Body of pancreas (tissue), 4 donors: ENCODE measurements at regions of chr12 and their contacts with region 1.

Region 1: GRCh38 chr12:110599334-110599733 is 14.6 kb upstream of the TCTN1 start:
- DNase-seq: no peak
- ATAC-seq: no peak
- H3K4me3 ChIP-seq: no peak overlapping the region
- H3K27ac ChIP-seq: no peak overlapping the region
- H3K4me1 ChIP-seq: no peaks in the 10 kb centered on the region
- H3K27me3 ChIP-seq: no peaks in the 10 kb centered on the region
- CTCF ChIP-seq: no peak
- POLR2A ChIP-seq: no peak

Region 2: GRCh38 chr12:110528277-110528839 is 71.0 kb before region 1 on chr12:
- intact Hi-C with region 1: loop called (anchors 5 kb)
- DNase-seq: no peak
- ATAC-seq: no peak
- H3K4me3 ChIP-seq: no peak overlapping the region
- H3K27ac ChIP-seq: no peak overlapping the region
- H3K4me1 ChIP-seq: peaks cover 7% of the 10 kb centered on the region
- H3K27me3 ChIP-seq: no peaks in the 10 kb centered on the region
- CTCF ChIP-seq: no peak
- POLR2A ChIP-seq: no peak